ENCODE measurements at regions of chr4 and their contacts with region 1.

Region 1: GRCh38 chr4:169619959-169620879 is at the start of gene CLCN3:
- DNase-seq: peak; percentile 99
- ATAC-seq: peak; percentile 98
- total RNA-seq, gene CLCN3: 62.0 TPM

Region 2: DNA sequence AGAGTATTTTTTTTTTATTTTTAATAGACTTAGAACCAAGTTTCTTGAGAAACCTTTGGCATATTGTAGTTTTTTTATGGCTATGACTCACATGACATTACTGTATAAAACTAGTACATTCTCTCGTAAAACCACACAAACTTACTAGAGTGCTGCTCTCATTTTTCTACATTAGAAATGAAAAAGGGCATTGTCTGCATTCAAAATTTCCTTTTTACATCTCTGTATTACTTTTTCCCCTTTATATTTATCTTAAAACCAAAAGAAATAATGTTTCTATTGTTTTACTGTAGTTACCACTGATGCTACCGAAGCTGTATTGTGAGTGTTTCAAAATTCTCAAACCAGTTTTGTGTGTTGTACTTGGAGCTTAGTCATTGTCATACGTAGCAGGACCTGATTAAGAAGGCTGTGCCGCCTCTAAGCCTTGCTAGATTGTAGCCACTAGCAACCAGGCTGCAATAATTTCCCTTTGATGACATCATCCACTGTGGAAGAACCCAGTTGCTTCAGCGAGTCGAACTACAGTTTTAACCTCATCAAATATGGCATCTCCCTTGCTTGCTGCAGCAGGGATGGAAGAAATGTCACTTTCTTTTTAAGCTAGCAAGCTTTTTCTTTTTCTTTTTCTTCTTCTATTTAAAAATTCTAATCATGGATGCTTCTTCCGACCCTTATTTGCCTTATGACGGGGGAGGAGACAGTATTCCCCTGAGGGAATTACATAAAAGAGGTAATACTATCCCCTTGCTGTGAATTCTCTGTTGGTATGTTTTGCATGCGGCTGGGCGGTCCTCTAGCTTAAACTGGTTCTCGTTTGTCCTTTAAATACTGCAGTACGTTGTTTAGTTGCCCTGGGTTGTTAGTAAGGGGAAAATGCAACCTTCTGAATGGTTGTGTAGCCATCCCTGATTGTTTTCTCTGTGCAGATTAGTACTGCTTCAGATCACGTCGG is 39.8 kb after region 1 on chr4:
- intact Hi-C with region 1: loop called (anchors 2 kb)
- DNase-seq: peak; percentile 49
- ATAC-seq: peak; percentile 97

Region 3: DNA sequence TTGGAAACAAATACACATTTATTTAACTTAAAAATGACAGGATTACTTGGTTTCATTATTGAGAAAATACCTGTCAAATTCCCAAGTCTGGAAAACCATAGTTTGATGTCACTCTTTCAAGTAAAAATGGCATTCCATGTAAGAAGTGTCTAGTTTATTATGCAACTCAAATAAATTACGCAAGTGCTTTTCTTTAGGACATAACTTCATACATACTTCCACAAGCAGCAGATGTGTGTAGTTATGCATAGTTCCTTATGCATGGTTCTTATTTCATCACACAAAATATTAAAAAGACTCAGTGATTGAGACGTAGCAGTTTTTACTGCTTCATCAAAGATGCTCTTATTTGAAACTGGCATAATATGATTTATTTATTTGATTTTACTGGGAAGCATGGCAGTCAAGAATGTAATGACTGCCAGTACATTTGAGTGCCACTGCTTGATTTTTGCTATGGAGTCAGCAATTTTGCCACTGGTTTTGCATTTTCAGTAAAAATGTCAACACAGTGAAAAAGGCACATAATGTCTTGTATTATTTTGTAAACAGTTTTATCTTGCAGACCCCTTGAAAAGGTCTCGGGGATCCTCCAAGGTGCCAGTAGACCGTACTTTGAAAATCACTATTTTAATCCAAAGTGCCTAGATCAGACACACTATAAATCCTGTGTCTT is 62.3 kb after region 1 on chr4:
- intact Hi-C with region 1: loop called (anchors 10 kb)
- DNase-seq: no peak
- ATAC-seq: no peak

Region 4: GRCh38 chr4:169723207-169723965 is 103.2 kb after region 1 on chr4:
- intact Hi-C with region 1: no loop called
- DNase-seq: no peak
- ATAC-seq: no peak

Region 5: GRCh38 chr4:170027181-170027829 is 407.1 kb after region 1 on chr4:
- intact Hi-C with region 1: loop called (anchors 10 kb)
- DNase-seq: peak; percentile 95
- ATAC-seq: peak; percentile 98